ENCODE measurements at regions of chr21 and their contacts with region 1.

Region 1: DNA sequence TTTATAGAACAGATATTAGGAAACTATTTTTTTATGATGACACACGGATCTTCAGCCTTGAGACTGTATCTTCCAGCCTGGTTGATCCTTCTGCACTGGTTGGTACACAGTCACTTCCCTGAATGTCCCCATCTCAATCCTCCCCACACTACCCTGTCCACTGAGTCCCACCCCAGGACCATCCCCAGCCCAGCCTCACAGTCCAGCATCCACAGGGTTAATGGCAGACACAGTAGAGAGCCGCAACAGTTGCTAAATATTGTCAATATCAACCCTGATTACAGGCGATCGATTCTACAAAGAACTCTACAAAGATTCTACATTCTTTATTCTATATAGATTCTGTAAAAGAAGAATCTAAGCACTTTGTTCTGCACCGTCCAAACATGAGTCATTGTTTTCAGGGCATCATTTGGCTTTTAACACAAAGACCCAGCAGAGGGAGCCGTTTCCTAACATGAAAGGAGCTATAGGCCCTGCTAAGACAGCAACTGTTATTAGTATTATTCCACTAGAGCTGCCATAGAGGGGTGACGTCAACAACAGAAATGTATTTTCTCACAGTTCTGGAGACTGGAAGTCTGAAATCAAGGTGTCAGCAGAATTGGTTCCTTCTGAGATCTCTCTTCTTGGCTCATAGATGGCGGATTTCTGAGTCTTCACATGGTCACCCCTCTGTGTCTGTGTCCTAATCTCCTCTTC is 30.1 kb upstream of the IFNAR2 start:
- DNase-seq: peak; percentile 95
- H3K4me3 ChIP-seq: no peak overlapping the region
- H3K27ac ChIP-seq: no peak overlapping the region
- H3K4me1 ChIP-seq: no peaks in the 10 kb centered on the region
- H3K27me3 ChIP-seq: no peaks in the 10 kb centered on the region
- CTCF ChIP-seq: peak; percentile 66
- POLR2A ChIP-seq: no peak

Region 2: GRCh38 chr21:32940079-32941014 is 259.3 kb before region 1 on chr21:
- CTCF ChIA-PET with region 1: interaction called, 133 read pairs
- POLR2A ChIA-PET with region 1: no interaction called
- dilution Hi-C with region 1: no loop called
- intact Hi-C with region 1: loop called (anchors 1 kb)
- DNase-seq: peak; percentile 40
- H3K4me3 ChIP-seq: no peak overlapping the region
- H3K27ac ChIP-seq: no peak overlapping the region
- H3K4me1 ChIP-seq: no peaks in the 10 kb centered on the region
- H3K27me3 ChIP-seq: peaks cover 4 to 5% of the 10 kb centered on the region in 2 experiments
- CTCF ChIP-seq: peak; percentile 69 to 75
- POLR2A ChIP-seq: no peak

Region 3: GRCh38 chr21:33011462-33011861 is 188.2 kb before region 1 on chr21:
- CTCF ChIA-PET with region 1: no interaction called
- POLR2A ChIA-PET with region 1: no interaction called
- dilution Hi-C with region 1: no loop called
- intact Hi-C with region 1: no loop called
- DNase-seq: no peak
- H3K4me3 ChIP-seq: no peak overlapping the region
- H3K27ac ChIP-seq: no peak overlapping the region
- H3K4me1 ChIP-seq: no peaks in the 10 kb centered on the region
- H3K27me3 ChIP-seq: peaks cover 27 to 36% of the 10 kb centered on the region in 2 experiments
- CTCF ChIP-seq: no peak
- POLR2A ChIP-seq: no peak

Region 4: DNA sequence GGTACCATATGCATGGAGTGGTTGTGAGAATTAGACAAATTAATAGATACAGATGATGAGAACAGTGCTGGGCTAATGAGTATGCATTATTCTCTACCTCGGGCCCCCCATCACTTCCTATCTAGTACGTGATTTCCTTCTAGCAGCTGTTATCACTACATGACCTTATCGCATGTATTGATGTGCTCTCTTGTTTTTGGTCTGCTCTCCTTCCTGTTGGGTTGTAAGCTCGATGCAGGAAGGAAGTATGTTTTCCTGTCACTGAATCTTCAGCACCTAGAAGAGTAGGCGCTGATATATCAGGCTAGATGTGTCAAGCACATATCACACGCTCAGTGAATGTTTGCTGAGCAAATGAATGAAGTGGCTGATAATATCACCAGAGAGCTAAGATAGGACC is 13.8 kb before region 1 on chr21:
- CTCF ChIA-PET with region 1: interaction called, 22 read pairs
- POLR2A ChIA-PET with region 1: no interaction called
- dilution Hi-C with region 1: no loop called
- intact Hi-C with region 1: no loop called
- DNase-seq: no peak
- H3K4me3 ChIP-seq: no peak overlapping the region
- H3K27ac ChIP-seq: no peak overlapping the region
- H3K4me1 ChIP-seq: no peaks in the 10 kb centered on the region
- H3K27me3 ChIP-seq: peaks cover 4 to 26% of the 10 kb centered on the region in 2 experiments
- CTCF ChIP-seq: no peak
- POLR2A ChIP-seq: no peak

Region 5: DNA sequence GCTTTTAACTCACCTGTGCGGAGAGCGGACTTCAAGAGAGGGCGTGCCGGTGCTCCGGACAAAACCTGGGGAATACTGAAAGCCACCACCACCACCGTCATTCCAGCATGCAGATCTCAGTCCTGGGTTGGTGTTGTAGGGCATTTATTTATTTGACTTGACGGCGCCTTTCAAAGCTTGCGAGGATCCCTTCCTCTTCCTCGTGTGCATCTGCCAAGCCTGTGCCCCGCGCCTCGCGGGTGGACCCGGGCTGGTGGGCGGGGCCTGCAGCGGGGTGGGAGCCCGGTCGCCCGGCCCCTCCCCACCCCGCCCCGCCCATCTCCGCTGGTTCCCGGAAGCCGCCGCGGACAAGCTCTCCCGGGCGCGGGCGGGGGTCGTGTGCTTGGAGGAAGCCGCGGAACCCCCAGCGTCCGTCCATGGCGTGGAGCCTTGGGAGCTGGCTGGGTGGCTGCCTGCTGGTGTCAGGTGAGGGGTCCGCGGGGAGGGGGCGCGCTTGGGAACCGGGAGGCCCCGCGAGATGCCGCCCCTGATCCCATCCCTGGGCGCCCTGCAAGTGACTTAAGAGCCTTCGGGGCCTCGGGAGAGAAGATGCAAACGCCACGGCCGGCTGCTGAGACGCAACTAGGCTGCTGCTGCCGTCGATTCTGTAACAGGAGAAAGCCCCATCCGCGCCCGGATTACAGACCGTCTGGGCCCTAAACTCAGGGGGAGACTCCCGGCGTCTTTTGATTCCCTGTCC is 66.6 kb after region 1 on chr21 and contains the start of gene IL10RB:
- CTCF ChIA-PET with region 1: interaction called, 6 read pairs
- POLR2A ChIA-PET with region 1: no interaction called
- dilution Hi-C with region 1: no loop called
- intact Hi-C with region 1: loop called (anchors 2 kb)
- DNase-seq: peak; percentile 72
- H3K4me3 ChIP-seq: peak within 1 kb of the TSS; percentile 77 to 88 (median 84)
- H3K27ac ChIP-seq: peak within 1 kb of the TSS; percentile 54
- H3K4me1 ChIP-seq: peaks cover 10% of the 10 kb centered on the region
- H3K27me3 ChIP-seq: no peaks in the 10 kb centered on the region
- CTCF ChIP-seq: no peak
- POLR2A ChIP-seq: no peak
- total RNA-seq, gene IL10RB: 21.7 and 21.9 TPM in 2 replicates

Region 6: GRCh38 chr21:33374450-33375096 is 174.9 kb after region 1 on chr21:
- CTCF ChIA-PET with region 1: interaction called, 14 read pairs
- POLR2A ChIA-PET with region 1: no interaction called
- dilution Hi-C with region 1: no loop called
- intact Hi-C with region 1: loop called (anchors 1 kb)
- DNase-seq: peak; percentile 84
- H3K4me3 ChIP-seq: no peak overlapping the region
- H3K27ac ChIP-seq: no peak overlapping the region
- H3K4me1 ChIP-seq: peaks cover 15% of the 10 kb centered on the region
- H3K27me3 ChIP-seq: no peaks in the 10 kb centered on the region
- CTCF ChIP-seq: peak; percentile 54 to 60
- POLR2A ChIP-seq: no peak

Region 7: DNA sequence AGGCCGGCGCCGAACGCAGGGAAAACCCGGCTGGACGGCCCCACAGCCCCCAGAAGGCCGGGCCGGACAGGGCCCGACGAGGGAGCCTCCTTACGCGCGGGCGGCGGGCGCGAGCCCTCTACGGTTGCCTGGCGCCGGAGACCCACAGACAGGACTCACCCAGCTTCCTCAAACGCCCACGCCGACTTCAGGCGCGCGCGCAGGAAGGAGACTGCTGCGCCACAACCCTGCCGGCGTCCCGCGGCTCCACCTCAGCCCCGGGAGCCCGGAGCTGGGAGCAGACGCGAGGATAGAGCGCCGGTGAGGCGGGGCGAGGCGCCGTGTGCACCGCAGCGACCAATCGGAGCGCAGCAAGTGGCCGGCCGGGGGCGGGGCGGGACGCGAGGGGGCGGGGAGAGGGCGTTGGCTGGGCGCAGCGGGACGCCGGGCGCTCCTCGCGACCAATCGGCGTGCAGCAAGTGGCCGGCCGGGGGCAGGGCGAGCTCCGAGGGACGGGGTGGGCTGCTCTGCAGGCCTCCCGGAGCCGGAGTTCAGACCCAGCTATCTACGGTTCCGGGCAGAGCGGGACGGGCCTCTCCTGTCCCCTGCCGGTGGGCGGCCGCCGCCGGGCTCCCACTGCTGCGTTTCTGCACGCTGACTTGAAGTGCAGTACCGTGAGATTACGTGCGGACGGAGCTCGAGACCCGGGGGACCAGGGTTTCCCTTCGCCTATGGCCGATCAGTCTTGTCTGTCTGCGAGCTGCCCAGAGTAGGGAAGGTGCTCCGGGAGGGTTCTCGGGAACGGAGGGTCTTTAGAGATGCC is 280.2 kb after region 1 on chr21 and contains the start of gene TMEM50B:
- CTCF ChIA-PET with region 1: interaction called, 10 read pairs
- POLR2A ChIA-PET with region 1: interaction called, 3 read pairs
- dilution Hi-C with region 1: no loop called
- intact Hi-C with region 1: no loop called
- DNase-seq: peak; percentile 98
- H3K4me3 ChIP-seq: peak within 1 kb of the TSS; percentile 83 to 95 (median 91)
- H3K27ac ChIP-seq: peak within 1 kb of the TSS; percentile 72
- H3K4me1 ChIP-seq: peaks cover 4% of the 10 kb centered on the region
- H3K27me3 ChIP-seq: peaks cover 3% of the 10 kb centered on the region in 2 experiments
- CTCF ChIP-seq: peak; percentile 27 to 59
- POLR2A ChIP-seq: peak; percentile 94
- total RNA-seq, gene TMEM50B: 29.3 and 29.7 TPM in 2 replicates